ENCODE measurements at regions of chr10 and their contacts with region 1.

Region 1: GRCh38 chr10:97196223-97197029 is 10.7 kb upstream of the SLIT1 start:
- DNase-seq: peak; percentile 10
- H3K4me3 ChIP-seq: peak overlapping the region; percentile 61
- H3K27ac ChIP-seq: no peak overlapping the region
- H3K27me3 ChIP-seq: peaks cover 29% of the 10 kb centered on the region
- CTCF ChIP-seq: peak; percentile 83

Region 2: DNA sequence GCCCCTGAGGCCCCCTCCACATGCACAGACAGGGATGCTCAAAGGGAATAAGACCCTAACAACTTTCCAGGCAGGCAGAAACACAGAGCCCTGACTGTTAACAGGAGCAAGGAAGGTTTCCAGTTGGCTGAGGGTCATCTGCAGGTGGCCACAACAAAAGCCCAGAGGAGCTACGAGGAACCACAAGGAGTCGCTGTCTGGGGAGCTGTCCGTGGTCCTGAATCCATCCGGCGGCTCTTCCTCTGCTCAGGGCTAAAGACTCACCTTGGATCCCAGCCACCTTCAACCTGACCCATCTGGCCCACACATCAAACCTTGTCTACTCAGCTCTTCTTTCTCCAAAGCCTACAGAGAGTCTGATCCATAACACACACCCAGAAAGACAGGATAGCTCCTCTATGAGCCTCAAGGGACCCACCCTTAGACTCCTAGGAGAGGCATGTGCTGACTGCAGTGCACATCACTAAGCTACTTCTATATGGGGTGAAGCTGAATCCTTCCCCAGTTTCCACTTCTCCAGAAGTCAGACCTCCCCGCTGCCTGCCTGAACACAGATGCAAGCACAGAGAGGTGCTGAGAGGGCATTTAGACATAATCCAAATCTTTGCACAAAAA is 114.7 kb before region 1 on chr10:
- CTCF ChIA-PET with region 1: interaction called, 14 read pairs
- POLR2A ChIA-PET with region 1: no interaction called
- DNase-seq: peak; percentile 29
- H3K4me3 ChIP-seq: no peak overlapping the region
- H3K27ac ChIP-seq: no peak overlapping the region
- H3K27me3 ChIP-seq: peaks cover 14% of the 10 kb centered on the region
- CTCF ChIP-seq: peak; percentile 96

Region 3: GRCh38 chr10:97138174-97138573 is 58.3 kb before region 1 on chr10:
- CTCF ChIA-PET with region 1: no interaction called
- POLR2A ChIA-PET with region 1: no interaction called
- DNase-seq: no peak
- H3K4me3 ChIP-seq: no peak overlapping the region
- H3K27ac ChIP-seq: no peak overlapping the region
- H3K27me3 ChIP-seq: peaks cover 43% of the 10 kb centered on the region
- CTCF ChIP-seq: no peak

Region 4: GRCh38 chr10:97217299-97217698 is 20.9 kb after region 1 on chr10:
- CTCF ChIA-PET with region 1: interaction called, 23 read pairs
- POLR2A ChIA-PET with region 1: no interaction called
- DNase-seq: no peak
- H3K4me3 ChIP-seq: no peak overlapping the region
- H3K27ac ChIP-seq: no peak overlapping the region
- H3K27me3 ChIP-seq: no peaks in the 10 kb centered on the region
- CTCF ChIP-seq: no peak

Measured in AG04450 (cell line).